Transverse colon (tissue), 4 donors: ENCODE measurements at regions of chr3 and their contacts with region 1.

Region 1: DNA sequence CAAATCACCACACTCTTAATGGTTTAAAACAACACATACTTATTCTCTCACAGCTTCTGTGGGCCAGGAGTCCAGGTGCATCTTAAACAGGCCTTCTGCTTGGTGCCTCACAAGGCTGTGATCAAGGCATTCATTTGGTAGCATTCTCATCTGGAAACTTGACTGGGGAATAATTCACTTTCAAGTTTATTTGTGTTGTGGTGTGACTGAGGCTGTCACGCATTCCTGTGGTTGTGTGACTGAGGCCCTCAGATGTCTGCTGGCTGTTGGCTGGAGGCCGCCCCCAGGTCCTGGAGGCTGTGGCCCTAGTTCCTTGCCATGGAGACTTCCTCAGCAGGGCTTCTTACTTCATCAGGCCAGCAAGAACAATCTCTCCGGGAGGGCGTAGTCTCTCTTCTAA is 16.9 kb upstream of the FAM3D start:
- DNase-seq: no peak
- H3K4me3 ChIP-seq: no peak overlapping the region
- H3K27ac ChIP-seq: no peak overlapping the region
- H3K4me1 ChIP-seq: peaks cover 0 to 23% (median 14%) of the 10 kb centered on the region in 4 donors
- H3K27me3 ChIP-seq: no peaks in the 10 kb centered on the region
- CTCF ChIP-seq: no peak
- EP300 ChIP-seq: no peak
- POLR2A ChIP-seq: no peak

Region 2: GRCh38 chr3:58659051-58659675 is 24.3 kb before region 1 on chr3:
- in situ Hi-C with region 1: no loop called
- intact Hi-C with region 1: no loop called
- DNase-seq: peak; percentile 54
- H3K4me3 ChIP-seq: no peak overlapping the region
- H3K27ac ChIP-seq: peak overlapping the region; percentile 32 to 74 (median 52)
- H3K4me1 ChIP-seq: peaks cover 0 to 50% (median 23%) of the 10 kb centered on the region in 4 donors
- H3K27me3 ChIP-seq: no peaks in the 10 kb centered on the region
- CTCF ChIP-seq: peak in 4 of 5 experiments; percentile 15 to 51 (median 40)
- EP300 ChIP-seq: no peak
- POLR2A ChIP-seq: no peak

Region 3: GRCh38 chr3:58722561-58722960 is 39.1 kb after region 1 on chr3:
- in situ Hi-C with region 1: no loop called
- intact Hi-C with region 1: loop called (anchors 1 kb)
- DNase-seq: no peak
- H3K4me3 ChIP-seq: no peak overlapping the region
- H3K27ac ChIP-seq: no peak overlapping the region
- H3K4me1 ChIP-seq: peaks cover 6 to 25% (median 7%) of the 10 kb centered on the region in 4 donors
- H3K27me3 ChIP-seq: no peaks in the 10 kb centered on the region
- CTCF ChIP-seq: no peak
- EP300 ChIP-seq: no peak
- POLR2A ChIP-seq: no peak